GM12878 (cell line): ENCODE measurements at regions of chr15 and their contacts with region 1.

Region 1: DNA sequence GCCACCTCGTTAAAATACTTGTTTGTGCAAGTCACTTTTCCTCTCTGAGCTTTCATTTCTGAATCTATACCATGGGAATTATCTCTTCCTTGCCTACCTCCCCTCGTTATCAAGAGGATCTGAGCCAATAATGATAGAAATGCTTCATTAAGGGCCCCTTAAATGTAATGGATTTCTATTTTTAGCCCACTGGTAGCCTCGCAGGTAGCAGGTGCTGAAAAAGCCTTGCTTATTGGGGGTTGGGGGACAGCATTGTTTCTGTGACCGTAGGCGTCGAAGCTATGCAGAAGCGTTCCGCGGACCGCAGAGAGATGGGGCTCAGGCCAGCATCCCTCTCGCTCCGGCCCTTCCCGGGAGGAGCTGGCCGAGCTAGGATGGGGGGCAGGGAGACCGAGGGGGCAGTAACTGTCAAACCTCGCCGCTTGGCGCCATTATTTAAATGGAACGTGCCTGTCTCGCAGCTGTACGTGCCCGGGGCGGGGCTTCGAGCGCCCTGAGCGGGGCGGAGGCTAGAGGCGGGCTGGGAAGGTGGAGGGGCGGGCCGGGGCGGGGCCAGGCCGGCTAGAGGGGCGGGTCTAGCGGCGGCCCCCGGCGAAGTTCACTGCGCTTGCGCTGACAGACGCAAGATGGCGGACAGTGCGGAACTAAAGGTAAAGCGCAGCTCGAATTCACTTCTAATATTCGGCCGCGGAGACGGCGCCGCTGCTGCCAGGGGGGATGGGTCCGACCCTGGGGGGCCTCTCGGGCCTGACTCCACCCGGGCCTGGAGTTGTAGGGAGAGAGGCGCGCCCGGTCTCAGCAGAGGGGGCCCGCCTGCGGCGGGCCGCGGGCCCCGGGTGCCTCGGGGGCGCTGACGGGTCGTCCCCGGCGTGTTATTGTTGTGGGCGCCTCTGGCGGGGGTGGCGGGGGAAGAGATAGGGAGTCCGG is at the start of gene PIAS1:
- DNase-seq: peak; percentile 73
- ATAC-seq: peak; percentile 87
- H3K4me3 ChIP-seq: peak within 1 kb of the TSS; percentile 79
- H3K27ac ChIP-seq: peak within 1 kb of the TSS; percentile 88
- H3K4me1 ChIP-seq: peaks cover 6% of the 10 kb centered on the region
- H3K27me3 ChIP-seq: no peaks in the 10 kb centered on the region
- CTCF ChIP-seq: no peak
- EP300 ChIP-seq: no peak
- POLR2A ChIP-seq: peak; percentile 93
- RAD21 ChIP-seq: no peak
- polyA plus RNA-seq, gene PIAS1: 20.2 to 22.2 TPM

Region 2: DNA sequence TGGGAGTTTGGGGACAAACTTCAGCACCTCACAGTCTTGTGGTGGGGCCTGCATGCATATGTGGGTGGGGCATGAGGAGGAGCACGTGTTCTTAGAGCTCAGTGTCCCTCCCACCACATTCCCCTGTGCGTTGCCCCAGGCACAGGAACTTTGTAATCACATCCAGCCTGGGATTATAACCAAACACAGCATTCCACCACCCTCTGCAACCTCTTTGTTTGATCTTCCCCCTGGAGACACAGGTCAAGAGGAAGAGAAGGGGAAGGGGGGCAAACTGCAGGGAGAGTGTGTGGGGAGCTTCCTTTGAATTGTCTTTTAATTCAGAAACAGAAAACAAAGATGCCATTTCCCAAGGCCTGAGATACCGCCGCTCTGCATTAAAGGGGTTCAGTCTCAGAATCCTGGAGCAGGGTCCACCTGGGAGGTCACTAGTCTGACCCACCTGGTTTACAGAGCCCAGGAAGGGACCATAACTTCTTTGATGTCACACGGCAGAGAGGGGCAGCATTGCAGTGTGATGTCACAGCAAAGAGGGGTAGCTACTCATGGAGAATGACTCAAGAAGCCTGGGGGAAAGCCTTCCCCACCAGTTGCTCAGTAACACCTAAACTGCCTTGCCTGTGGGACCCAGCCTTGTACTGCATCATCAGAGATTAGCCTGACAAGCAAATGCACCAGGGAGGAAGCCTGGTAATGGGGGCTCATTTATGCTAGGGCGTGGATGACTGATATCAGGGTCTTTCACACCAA is 107.8 kb before region 1 on chr15:
- CTCF ChIA-PET with region 1: no interaction called
- POLR2A ChIA-PET with region 1: interaction called, 7 read pairs
- RAD21 ChIA-PET with region 1: interaction called, 3 read pairs
- SMC1A ChIA-PET with region 1: interaction called, 12 read pairs
- in situ Hi-C with region 1: no loop called
- intact Hi-C with region 1: loop called (anchors 2 kb)
- DNase-seq: no peak
- ATAC-seq: peak; percentile 69
- H3K4me3 ChIP-seq: peak overlapping the region; percentile 43
- H3K27ac ChIP-seq: peak overlapping the region; percentile 84
- H3K4me1 ChIP-seq: peaks cover 16% of the 10 kb centered on the region
- H3K27me3 ChIP-seq: no peaks in the 10 kb centered on the region
- CTCF ChIP-seq: no peak
- EP300 ChIP-seq: no peak
- POLR2A ChIP-seq: no peak; the same call in 1 of the 2 replicates
- RAD21 ChIP-seq: no peak

Region 3: DNA sequence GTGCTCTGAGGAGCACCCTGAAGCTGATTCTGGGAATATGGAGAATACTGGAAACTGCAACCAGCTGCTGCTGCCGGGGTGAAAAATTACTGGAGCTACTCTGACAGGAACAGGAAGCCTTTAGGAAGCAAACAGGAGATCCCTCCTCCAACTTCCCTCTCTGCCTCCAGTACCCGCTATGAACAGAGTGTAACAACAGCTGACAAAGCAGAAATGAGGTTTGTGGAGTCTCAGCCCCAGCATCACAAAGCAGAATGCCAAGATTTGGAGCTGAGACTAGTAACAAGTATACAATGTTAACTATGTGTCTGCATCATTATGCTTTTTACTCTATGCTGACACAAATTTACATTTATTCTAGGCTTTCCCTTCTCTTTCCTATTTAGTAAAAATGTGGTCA is 22.6 kb before region 1 on chr15:
- CTCF ChIA-PET with region 1: interaction called, 3 read pairs
- POLR2A ChIA-PET with region 1: interaction called, 7 read pairs
- RAD21 ChIA-PET with region 1: interaction called, 3 read pairs
- SMC1A ChIA-PET with region 1: interaction called, 3 read pairs
- in situ Hi-C with region 1: no loop called
- intact Hi-C with region 1: loop called (anchors 2 kb)
- DNase-seq: no peak
- ATAC-seq: no peak
- H3K4me3 ChIP-seq: no peak overlapping the region
- H3K27ac ChIP-seq: no peak overlapping the region
- H3K4me1 ChIP-seq: peaks cover 8% of the 10 kb centered on the region
- H3K27me3 ChIP-seq: no peaks in the 10 kb centered on the region
- CTCF ChIP-seq: no peak
- EP300 ChIP-seq: no peak
- POLR2A ChIP-seq: no peak
- RAD21 ChIP-seq: no peak

Region 4: DNA sequence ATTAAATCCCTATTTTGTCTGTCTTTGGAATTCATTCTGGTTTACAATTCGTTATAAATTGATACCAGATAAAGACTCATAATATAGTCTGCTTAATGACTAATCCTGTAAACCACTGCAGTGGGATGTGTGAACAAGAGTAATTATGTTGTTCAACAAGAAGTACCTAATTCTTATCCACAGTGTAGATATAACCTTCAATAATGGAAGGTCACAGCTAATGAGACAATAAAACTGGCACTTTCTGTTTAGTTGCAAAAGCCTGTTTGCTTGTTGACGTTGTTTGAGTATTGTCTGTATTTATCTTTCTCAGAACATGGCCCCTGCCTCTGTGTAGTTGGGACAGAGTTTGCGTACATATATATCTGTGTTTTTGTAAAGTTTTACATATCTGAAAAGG is 26.8 kb after region 1 on chr15:
- CTCF ChIA-PET with region 1: interaction called, 5 read pairs
- POLR2A ChIA-PET with region 1: interaction called, 5 read pairs
- RAD21 ChIA-PET with region 1: interaction called, 3 read pairs
- SMC1A ChIA-PET with region 1: interaction called, 26 read pairs
- in situ Hi-C with region 1: no loop called
- intact Hi-C with region 1: no loop called
- DNase-seq: no peak
- ATAC-seq: peak; percentile 53
- H3K4me3 ChIP-seq: no peak overlapping the region
- H3K27ac ChIP-seq: no peak overlapping the region
- H3K4me1 ChIP-seq: peaks cover 15% of the 10 kb centered on the region
- H3K27me3 ChIP-seq: no peaks in the 10 kb centered on the region
- CTCF ChIP-seq: no peak
- EP300 ChIP-seq: no peak
- POLR2A ChIP-seq: no peak
- RAD21 ChIP-seq: no peak

Region 5: GRCh38 chr15:68114356-68114755 is 60.4 kb after region 1 on chr15:
- CTCF ChIA-PET with region 1: interaction called, 4 read pairs
- POLR2A ChIA-PET with region 1: no interaction called
- RAD21 ChIA-PET with region 1: interaction called, 12 read pairs
- SMC1A ChIA-PET with region 1: interaction called, 4 read pairs
- in situ Hi-C with region 1: no loop called
- intact Hi-C with region 1: no loop called
- DNase-seq: no peak
- ATAC-seq: peak; percentile 70
- H3K4me3 ChIP-seq: peak overlapping the region; percentile 47; the same call in 1 of the 2 replicates
- H3K27ac ChIP-seq: peak overlapping the region; percentile 24; the same call in 1 of the 2 replicates
- H3K4me1 ChIP-seq: peaks cover 17% of the 10 kb centered on the region
- H3K27me3 ChIP-seq: no peaks in the 10 kb centered on the region
- CTCF ChIP-seq: no peak
- EP300 ChIP-seq: no peak
- POLR2A ChIP-seq: no peak
- RAD21 ChIP-seq: no peak